CD4-positive, alpha-beta T cell (primary cell): ENCODE measurements at regions of chrX and their contacts with region 1.

Region 1: GRCh38 chrX:45849253-45849862 is 648.7 kb upstream of the DIPK2B start:
- DNase-seq: peak in 6 of 14 experiments; percentile 1 to 67 (median 52)
- ATAC-seq: peak; percentile 54
- H3K4me3 ChIP-seq: peak overlapping the region; percentile 66
- H3K4me3 Mint-ChIP-seq: peak overlapping the region; percentile 96
- H3K27ac ChIP-seq: no peak overlapping the region
- H3K27ac Mint-ChIP-seq: peak overlapping the region; percentile 80
- H3K4me1 ChIP-seq: peaks cover 3% of the 10 kb centered on the region
- H3K4me1 Mint-ChIP-seq: peaks cover 9% of the 10 kb centered on the region
- H3K27me3 ChIP-seq: no peaks in the 10 kb centered on the region
- H3K27me3 Mint-ChIP-seq: no peaks in the 10 kb centered on the region
- CTCF ChIP-seq: peak; percentile 53

Region 2: GRCh38 chrX:44542567-44543325 is 1306.6 kb before region 1 on chrX and contains the start of gene FUNDC1:
- CTCF ChIA-PET with region 1: no interaction called
- POLR2A ChIA-PET with region 1: no interaction called
- intact Hi-C with region 1: loop called in 1 of 2 experiments (anchors 10 kb)
- DNase-seq: peak; percentile 77 to 97 (median 90)
- ATAC-seq: peak; percentile 94
- H3K4me3 ChIP-seq: peak within 1 kb of the TSS; percentile 88
- H3K4me3 Mint-ChIP-seq: peak within 1 kb of the TSS; percentile 100
- H3K27ac ChIP-seq: peak within 1 kb of the TSS; percentile 46 to 54
- H3K27ac Mint-ChIP-seq: peak within 1 kb of the TSS; percentile 97
- H3K4me1 ChIP-seq: peaks cover 9% of the 10 kb centered on the region
- H3K4me1 Mint-ChIP-seq: peaks cover 37% of the 10 kb centered on the region
- H3K27me3 ChIP-seq: no peaks in the 10 kb centered on the region
- H3K27me3 Mint-ChIP-seq: no peaks in the 10 kb centered on the region
- CTCF ChIP-seq: no peak
- total RNA-seq, gene FUNDC1: 4.8 to 5.4 TPM

Region 3: GRCh38 chrX:45515262-45516215 is 333.8 kb before region 1 on chrX:
- CTCF ChIA-PET with region 1: interaction called, 3 read pairs
- POLR2A ChIA-PET with region 1: no interaction called
- intact Hi-C with region 1: loop called in 1 of 2 experiments (anchors 1 kb)
- DNase-seq: peak in 11 of 14 experiments; percentile 1 to 68 (median 14)
- ATAC-seq: no peak
- H3K4me3 ChIP-seq: no peak overlapping the region
- H3K4me3 Mint-ChIP-seq: no peak overlapping the region
- H3K27ac ChIP-seq: no peak overlapping the region
- H3K27ac Mint-ChIP-seq: no peak overlapping the region
- H3K4me1 ChIP-seq: no peaks in the 10 kb centered on the region
- H3K4me1 Mint-ChIP-seq: peaks cover 4% of the 10 kb centered on the region
- H3K27me3 ChIP-seq: no peaks in the 10 kb centered on the region
- H3K27me3 Mint-ChIP-seq: no peaks in the 10 kb centered on the region
- CTCF ChIP-seq: peak; percentile 52

Region 4: DNA sequence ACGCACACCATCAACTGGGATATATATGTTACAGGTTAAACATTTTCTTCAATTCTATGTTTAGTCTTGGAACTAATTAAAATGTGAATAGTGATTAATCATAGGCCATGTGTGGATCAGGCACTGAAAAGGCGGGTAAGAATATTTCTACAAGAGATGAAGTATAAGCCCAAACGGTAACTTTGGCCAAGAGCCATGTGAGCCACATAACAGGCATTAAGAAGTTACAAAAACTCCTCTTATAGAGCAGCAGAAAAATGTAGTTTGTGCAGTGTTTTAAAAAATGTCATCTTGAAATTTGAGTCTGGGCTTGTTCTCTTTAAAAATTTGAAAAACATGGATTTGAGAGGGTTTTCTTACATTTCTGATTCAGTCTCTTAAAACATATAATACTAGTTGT is 126.9 kb before region 1 on chrX:
- CTCF ChIA-PET with region 1: no interaction called
- POLR2A ChIA-PET with region 1: no interaction called
- intact Hi-C with region 1: no loop called
- DNase-seq: no peak
- ATAC-seq: no peak
- H3K4me3 ChIP-seq: no peak overlapping the region
- H3K4me3 Mint-ChIP-seq: no peak overlapping the region
- H3K27ac ChIP-seq: no peak overlapping the region
- H3K27ac Mint-ChIP-seq: no peak overlapping the region
- H3K4me1 ChIP-seq: no peaks in the 10 kb centered on the region
- H3K4me1 Mint-ChIP-seq: no peaks in the 10 kb centered on the region
- H3K27me3 ChIP-seq: no peaks in the 10 kb centered on the region
- H3K27me3 Mint-ChIP-seq: no peaks in the 10 kb centered on the region
- CTCF ChIP-seq: no peak

Region 5: GRCh38 chrX:45769761-45770582 is 79.4 kb before region 1 on chrX:
- CTCF ChIA-PET with region 1: interaction called, 5 read pairs
- POLR2A ChIA-PET with region 1: interaction called, 19 read pairs
- intact Hi-C with region 1: loop called in 1 of 2 experiments (anchors 2 kb)
- DNase-seq: peak in 7 of 14 experiments; percentile 6 to 78 (median 18)
- ATAC-seq: peak; percentile 25
- H3K4me3 ChIP-seq: peak overlapping the region; percentile 64
- H3K4me3 Mint-ChIP-seq: peak overlapping the region; percentile 93
- H3K27ac ChIP-seq: peak overlapping the region; percentile 63 to 71
- H3K27ac Mint-ChIP-seq: peak overlapping the region; percentile 97
- H3K4me1 ChIP-seq: peaks cover 32% of the 10 kb centered on the region
- H3K4me1 Mint-ChIP-seq: peaks cover 89% of the 10 kb centered on the region
- H3K27me3 ChIP-seq: no peaks in the 10 kb centered on the region
- H3K27me3 Mint-ChIP-seq: no peaks in the 10 kb centered on the region
- CTCF ChIP-seq: no peak

Region 6: GRCh38 chrX:45806410-45807121 is 42.8 kb before region 1 on chrX:
- CTCF ChIA-PET with region 1: interaction called, 5 read pairs
- POLR2A ChIA-PET with region 1: interaction called, 47 read pairs
- intact Hi-C with region 1: loop called (anchors 2 to 5 kb)
- DNase-seq: peak in 12 of 14 experiments; percentile 7 to 87 (median 35)
- ATAC-seq: peak; percentile 84
- H3K4me3 ChIP-seq: peak overlapping the region; percentile 50
- H3K4me3 Mint-ChIP-seq: peak overlapping the region; percentile 90
- H3K27ac ChIP-seq: peak overlapping the region; percentile 67 to 82
- H3K27ac Mint-ChIP-seq: peak overlapping the region; percentile 93
- H3K4me1 ChIP-seq: peaks cover 24% of the 10 kb centered on the region
- H3K4me1 Mint-ChIP-seq: peaks cover 74% of the 10 kb centered on the region
- H3K27me3 ChIP-seq: no peaks in the 10 kb centered on the region
- H3K27me3 Mint-ChIP-seq: no peaks in the 10 kb centered on the region
- CTCF ChIP-seq: no peak